ENCODE measurements at regions of chr5 and their contacts with region 1.

Region 1: GRCh38 chr5:96614110-96614691 is 48.0 kb upstream of the CAST start:
- DNase-seq: peak; percentile 64 to 84
- H3K4me3 ChIP-seq: peak overlapping the region; percentile 31; the same call in 1 of the 2 replicates
- H3K27ac ChIP-seq: peak overlapping the region; percentile 60
- H3K4me1 ChIP-seq: peaks cover 24% of the 10 kb centered on the region
- H3K27me3 ChIP-seq: no peaks in the 10 kb centered on the region
- CTCF ChIP-seq: peak; percentile 82

Region 2: DNA sequence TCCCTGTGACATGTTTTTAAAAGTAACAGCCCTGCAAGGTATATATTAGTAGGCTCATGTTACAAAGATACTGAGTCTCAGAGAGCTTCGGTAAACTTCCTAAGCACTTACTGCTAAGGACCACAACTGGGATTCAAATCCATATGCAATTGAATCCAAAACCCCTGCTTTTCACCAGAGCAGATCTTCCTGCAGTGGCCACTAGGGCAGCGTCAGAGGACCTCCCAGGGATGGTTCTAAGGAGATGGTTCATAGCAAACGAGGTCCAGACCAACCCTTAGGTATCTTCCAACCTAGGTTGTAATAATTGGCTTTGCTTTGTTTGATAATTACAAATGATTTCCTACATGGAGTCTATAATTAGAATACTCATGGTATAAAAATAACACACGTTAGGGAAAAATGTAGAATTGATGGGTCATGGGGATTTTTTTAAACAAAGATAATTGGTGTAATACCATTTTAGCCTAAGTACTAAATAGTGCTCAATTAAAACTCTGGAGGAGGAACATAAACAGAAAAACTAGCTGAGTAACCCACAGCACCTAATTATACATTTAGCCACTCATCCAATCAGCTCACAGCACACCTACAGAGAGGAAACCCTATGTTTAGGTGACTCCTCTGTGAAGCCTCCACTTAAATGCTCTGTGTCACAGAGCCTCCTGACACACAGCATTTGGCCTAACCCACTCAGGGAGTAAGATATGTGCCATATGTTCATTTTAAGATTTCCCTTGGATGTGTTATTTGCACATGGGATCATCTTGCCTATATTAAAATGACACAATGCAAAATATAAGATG is 38.0 kb after region 1 on chr5:
- CTCF ChIA-PET with region 1: interaction called, 3 read pairs
- POLR2A ChIA-PET with region 1: no interaction called
- intact Hi-C with region 1: loop called (anchors 2 kb)
- DNase-seq: peak in 1 of 2 experiments; percentile 18
- H3K4me3 ChIP-seq: peak overlapping the region; percentile 11; the same call in 1 of the 2 replicates
- H3K27ac ChIP-seq: peak overlapping the region; percentile 90
- H3K4me1 ChIP-seq: peaks cover 81% of the 10 kb centered on the region
- H3K27me3 ChIP-seq: no peaks in the 10 kb centered on the region
- CTCF ChIP-seq: peak; percentile 47; the same call in 1 of the 2 replicates

Region 3: GRCh38 chr5:96687812-96688453 is 73.7 kb after region 1 on chr5:
- CTCF ChIA-PET with region 1: interaction called, 16 read pairs
- POLR2A ChIA-PET with region 1: no interaction called
- intact Hi-C with region 1: loop called (anchors 1 kb)
- DNase-seq: peak in 1 of 2 experiments; percentile 39
- H3K4me3 ChIP-seq: no peak overlapping the region; the same call in 1 of the 2 replicates
- H3K27ac ChIP-seq: peak overlapping the region; percentile 10
- H3K4me1 ChIP-seq: peaks cover 9% of the 10 kb centered on the region; the same call in 1 of the 2 replicates
- H3K27me3 ChIP-seq: no peaks in the 10 kb centered on the region
- CTCF ChIP-seq: peak; percentile 82

Region 4: GRCh38 chr5:96718635-96719077 is 104.5 kb after region 1 on chr5:
- CTCF ChIA-PET with region 1: no interaction called
- POLR2A ChIA-PET with region 1: interaction called, 13 read pairs
- intact Hi-C with region 1: no loop called
- DNase-seq: peak in 1 of 2 experiments; percentile 51
- H3K4me3 ChIP-seq: no peak overlapping the region
- H3K27ac ChIP-seq: no peak overlapping the region
- H3K4me1 ChIP-seq: peaks cover 20% of the 10 kb centered on the region
- H3K27me3 ChIP-seq: no peaks in the 10 kb centered on the region
- CTCF ChIP-seq: no peak

Region 5: GRCh38 chr5:96752341-96753016 is 138.3 kb after region 1 on chr5:
- CTCF ChIA-PET with region 1: no interaction called
- POLR2A ChIA-PET with region 1: no interaction called
- intact Hi-C with region 1: loop called (anchors 5 kb)
- DNase-seq: peak in 1 of 2 experiments; percentile 11
- H3K4me3 ChIP-seq: no peak overlapping the region
- H3K27ac ChIP-seq: no peak overlapping the region; the same call in 1 of the 2 replicates
- H3K4me1 ChIP-seq: no peaks in the 10 kb centered on the region
- H3K27me3 ChIP-seq: no peaks in the 10 kb centered on the region
- CTCF ChIP-seq: peak; percentile 78

Region 6: DNA sequence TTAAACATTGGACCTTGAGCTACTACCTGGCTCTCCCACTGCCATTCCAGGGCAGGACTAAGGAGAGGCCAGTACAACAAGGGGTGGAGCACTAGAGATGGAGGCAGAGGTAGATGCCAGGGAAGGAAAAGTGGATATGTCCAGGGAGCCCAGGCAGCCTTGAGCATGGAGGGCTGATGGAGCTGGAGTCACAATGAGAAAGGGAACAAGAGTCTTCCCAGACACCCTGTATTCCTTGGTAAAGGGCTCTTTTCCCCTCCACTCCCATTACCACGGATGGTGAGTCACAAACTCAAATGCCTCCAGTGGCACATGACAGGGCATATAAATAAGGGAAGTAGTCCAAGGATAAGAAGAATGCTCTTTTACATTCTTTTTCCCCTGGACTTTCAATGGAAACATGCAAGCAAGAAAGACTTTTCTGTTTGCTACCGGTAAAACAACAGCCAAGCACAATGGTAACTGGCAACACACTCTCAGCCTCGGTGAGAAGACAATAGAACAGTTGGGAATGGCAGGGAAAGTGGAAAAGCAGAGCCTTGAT is 176.8 kb after region 1 on chr5:
- CTCF ChIA-PET with region 1: no interaction called
- POLR2A ChIA-PET with region 1: no interaction called
- intact Hi-C with region 1: no loop called
- DNase-seq: no peak
- H3K4me3 ChIP-seq: no peak overlapping the region
- H3K27ac ChIP-seq: no peak overlapping the region
- H3K4me1 ChIP-seq: no peaks in the 10 kb centered on the region
- H3K27me3 ChIP-seq: no peaks in the 10 kb centered on the region
- CTCF ChIP-seq: no peak

Region 7: DNA sequence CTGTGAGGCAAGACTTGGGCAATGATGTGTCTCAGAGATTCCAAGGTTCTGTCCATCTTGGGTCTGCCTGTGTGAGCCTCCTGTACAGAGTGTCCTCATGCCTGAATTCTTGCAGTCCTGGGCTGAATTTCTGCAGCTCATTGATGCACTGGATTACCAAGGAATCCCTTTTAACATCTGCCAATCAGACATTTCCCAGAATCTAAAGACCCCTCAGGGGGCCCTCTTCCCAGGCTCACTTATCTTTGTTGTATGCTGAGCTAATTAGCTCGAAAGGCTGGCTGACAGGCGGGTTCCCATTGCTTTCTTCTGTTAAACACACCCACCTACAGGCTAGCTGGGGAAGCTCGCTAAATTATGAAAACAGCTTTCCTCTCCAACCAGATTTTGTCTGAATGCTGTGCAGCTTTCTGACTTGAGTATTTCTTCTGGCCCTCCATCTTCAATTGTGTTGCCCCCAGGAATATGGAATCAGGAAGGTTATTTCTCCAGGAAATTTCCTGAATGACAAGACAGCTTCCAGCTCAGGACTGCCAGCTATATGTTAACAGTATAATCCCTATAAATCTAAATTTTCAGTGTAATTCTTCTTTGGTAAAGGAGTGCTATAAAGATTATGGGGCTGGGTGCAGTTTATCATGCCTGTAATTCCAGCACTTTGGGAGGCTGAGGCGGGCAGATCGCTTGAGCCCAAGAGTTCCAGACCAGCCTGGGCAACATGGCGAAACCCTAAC is 528.5 kb after region 1 on chr5 and contains the start of gene LIX1:
- CTCF ChIA-PET with region 1: no interaction called
- POLR2A ChIA-PET with region 1: no interaction called
- intact Hi-C with region 1: loop called (anchors 5 kb)
- DNase-seq: peak in 1 of 2 experiments; percentile 26
- H3K4me3 ChIP-seq: no peak within 1 kb of the TSS
- H3K27ac ChIP-seq: no peak within 1 kb of the TSS
- H3K4me1 ChIP-seq: no peaks in the 10 kb centered on the region
- H3K27me3 ChIP-seq: no peaks in the 10 kb centered on the region
- CTCF ChIP-seq: peak; percentile 73
- total RNA-seq, gene LIX1: not detected in 2 replicates

Measured in PC-9 (cell line).